Activated CD4-positive, alpha-beta T cell treated with anti-CD3 and anti-CD28 coated beads, Interleukin-2, amount 10 ng/mL, durations not matched to agents 7 days and 5 days (primary cell): ENCODE measurements at regions of chr1 and their contacts with region 1.

Region 1: DNA sequence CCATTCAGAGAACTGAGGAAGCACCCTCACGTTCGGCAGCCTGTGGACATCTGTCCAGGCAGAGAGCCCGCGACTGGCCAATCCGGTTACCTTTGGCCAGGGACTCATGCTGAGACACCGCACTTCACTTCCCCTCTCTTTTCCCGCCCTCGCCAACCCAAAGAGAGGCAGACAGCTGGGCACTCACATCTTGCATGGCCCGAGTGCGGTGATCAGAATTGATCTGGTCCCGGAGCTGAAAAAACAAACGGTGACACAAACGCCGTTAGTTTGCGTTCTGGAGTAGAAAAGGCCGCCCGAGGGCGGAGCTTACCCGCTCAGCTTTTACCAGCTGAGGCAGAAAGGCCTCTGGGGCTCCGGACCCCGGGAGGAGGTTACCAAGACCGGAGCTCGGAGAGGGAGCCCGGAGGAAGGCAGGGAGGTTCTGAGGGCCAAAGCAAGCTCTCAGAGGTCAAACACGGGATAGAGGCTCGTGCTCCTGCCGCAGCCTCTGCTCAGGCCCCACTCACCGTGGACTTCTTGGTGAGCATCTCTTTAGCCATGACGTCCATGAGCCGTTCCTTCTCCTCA is 376 bp downstream of the SF3A3 start:
- DNase-seq: peak; percentile 61
- H3K4me3 Mint-ChIP-seq: peak overlapping the region; percentile 94
- H3K27ac Mint-ChIP-seq: peak overlapping the region; percentile 94
- H3K4me1 Mint-ChIP-seq: peaks cover 26% of the 10 kb centered on the region
- H3K27me3 Mint-ChIP-seq: no peaks in the 10 kb centered on the region

Region 2: GRCh38 chr1:37922767-37923550 is 66.5 kb before region 1 on chr1:
- CTCF ChIA-PET with region 1: no interaction called
- POLR2A ChIA-PET with region 1: no interaction called
- DNase-seq: peak; percentile 20
- H3K4me3 Mint-ChIP-seq: no peak overlapping the region
- H3K27ac Mint-ChIP-seq: peak overlapping the region; percentile 64
- H3K4me1 Mint-ChIP-seq: peaks cover 40% of the 10 kb centered on the region
- H3K27me3 Mint-ChIP-seq: no peaks in the 10 kb centered on the region

Region 3: DNA sequence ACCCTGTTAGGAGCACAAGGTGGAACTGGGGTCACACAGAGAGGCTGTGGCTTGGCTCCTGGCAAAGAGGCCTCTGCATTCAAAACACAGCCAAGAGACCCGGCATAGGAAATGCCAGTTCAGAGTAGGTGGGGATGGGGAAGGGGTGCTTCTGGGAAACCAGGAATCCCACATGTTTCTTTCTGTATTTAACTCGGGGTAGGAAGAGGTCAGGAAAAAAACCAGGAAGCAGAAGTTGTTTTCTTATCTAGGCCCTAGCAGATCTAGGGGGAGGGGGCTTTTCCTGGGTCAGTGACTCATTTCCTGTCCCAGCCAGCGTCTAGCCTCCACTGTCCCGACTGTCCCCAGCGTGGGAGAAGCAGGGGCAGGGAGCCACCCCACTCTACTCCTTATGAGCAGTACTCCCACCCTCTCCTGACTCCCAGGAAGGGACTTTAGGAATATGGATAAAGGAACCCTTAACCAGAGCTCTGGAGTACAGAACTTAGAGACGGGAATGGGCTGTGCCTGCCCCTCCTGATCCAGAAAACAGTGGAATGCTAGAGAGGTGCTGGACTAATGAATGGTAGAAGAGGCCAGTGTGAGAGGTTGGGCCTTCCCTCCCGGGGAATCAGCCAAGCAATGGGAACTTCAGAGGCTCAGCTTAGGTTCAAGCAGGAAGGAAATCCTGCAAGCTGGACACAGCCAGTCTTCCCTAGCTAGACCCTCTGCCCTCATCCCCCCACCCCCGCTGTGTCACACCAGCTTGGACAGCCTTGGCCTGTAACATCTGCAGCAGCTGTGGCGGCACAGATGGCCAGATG is 10.2 kb after region 1 on chr1:
- CTCF ChIA-PET with region 1: interaction called, 18 read pairs
- POLR2A ChIA-PET with region 1: no interaction called
- DNase-seq: no peak
- H3K4me3 Mint-ChIP-seq: peak overlapping the region; percentile 30
- H3K27ac Mint-ChIP-seq: peak overlapping the region; percentile 90
- H3K4me1 Mint-ChIP-seq: peaks cover 58% of the 10 kb centered on the region
- H3K27me3 Mint-ChIP-seq: no peaks in the 10 kb centered on the region

Region 4: GRCh38 chr1:38009088-38009840 is 19.8 kb after region 1 on chr1:
- CTCF ChIA-PET with region 1: interaction called, 26 read pairs
- POLR2A ChIA-PET with region 1: no interaction called
- DNase-seq: peak; percentile 63
- H3K4me3 Mint-ChIP-seq: no peak overlapping the region
- H3K27ac Mint-ChIP-seq: peak overlapping the region; percentile 93
- H3K4me1 Mint-ChIP-seq: peaks cover 56% of the 10 kb centered on the region
- H3K27me3 Mint-ChIP-seq: no peaks in the 10 kb centered on the region

Region 5: DNA sequence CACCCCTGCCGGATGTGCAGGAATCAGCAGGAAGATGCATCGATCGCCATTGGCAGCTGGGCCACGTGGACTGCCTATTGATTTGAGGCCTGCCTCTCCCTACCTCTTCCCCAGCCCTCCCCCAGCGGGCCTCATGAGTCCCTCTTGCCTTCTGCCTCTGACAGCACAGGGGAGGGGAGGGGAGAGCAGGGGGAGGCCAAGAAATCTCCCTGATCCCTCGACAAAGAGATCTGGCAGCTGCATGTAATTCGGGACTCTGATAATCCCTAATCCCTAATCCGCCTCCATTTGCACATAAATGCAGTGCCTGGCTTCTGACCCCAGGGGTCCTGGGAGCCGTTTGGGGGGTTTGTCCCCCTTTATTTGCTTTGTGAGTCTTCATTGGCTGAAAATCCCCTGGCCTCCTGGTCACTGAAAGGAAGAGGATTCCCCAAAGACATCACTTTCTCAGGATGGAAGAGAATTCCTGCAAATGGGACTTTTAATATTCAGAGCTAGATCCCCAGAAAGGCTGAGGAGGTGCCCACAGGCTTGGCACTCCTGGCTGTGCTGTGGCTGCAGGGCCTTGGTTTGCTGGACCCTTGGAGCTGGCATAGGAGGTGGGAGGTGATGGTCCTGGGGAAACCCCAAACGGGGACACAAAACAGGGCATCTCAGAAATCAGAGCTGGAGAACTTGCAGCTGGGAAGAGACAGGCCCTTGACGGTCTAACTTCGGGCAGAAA is 296.5 kb after region 1 on chr1:
- CTCF ChIA-PET with region 1: no interaction called
- POLR2A ChIA-PET with region 1: no interaction called
- DNase-seq: no peak
- H3K4me3 Mint-ChIP-seq: no peak overlapping the region
- H3K27ac Mint-ChIP-seq: no peak overlapping the region
- H3K4me1 Mint-ChIP-seq: no peaks in the 10 kb centered on the region
- H3K27me3 Mint-ChIP-seq: peaks cover 22% of the 10 kb centered on the region